ENCODE measurements at regions of chr1 and their contacts with region 1.

Region 1: DNA sequence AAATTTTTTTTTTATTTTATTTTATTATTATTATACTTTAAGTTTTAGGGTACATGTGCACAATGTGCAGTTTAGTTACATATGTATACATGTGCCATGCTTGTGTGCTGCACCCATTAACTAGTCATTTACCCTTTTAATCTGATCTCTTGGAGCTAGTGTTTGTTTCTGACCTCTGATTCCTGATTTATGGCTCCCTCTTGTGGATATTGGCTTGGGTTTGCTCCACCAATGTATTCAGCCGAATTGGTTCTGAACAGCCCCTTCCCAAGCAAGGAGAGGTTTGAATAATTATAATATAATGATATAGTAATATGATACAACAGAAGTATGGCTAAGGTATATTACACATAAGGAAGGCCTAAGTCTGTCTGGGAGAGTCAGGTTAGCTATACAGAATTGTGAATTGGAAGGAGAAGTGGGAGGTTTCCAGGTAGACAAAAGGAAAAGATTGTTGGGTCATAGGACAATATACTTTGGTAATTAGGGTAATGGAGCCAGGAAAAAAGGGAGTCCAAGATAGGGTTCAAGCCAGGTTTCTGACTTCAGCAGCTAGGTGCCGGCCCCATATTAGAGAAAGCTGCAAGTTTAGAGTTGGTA is 53.1 kb upstream of the HMCN1 start:
- DNase-seq: peak; percentile 42
- H3K4me3 Mint-ChIP-seq: no peak overlapping the region
- H3K27ac Mint-ChIP-seq: no peak overlapping the region
- H3K4me1 Mint-ChIP-seq: peaks cover 15% of the 10 kb centered on the region
- H3K27me3 Mint-ChIP-seq: no peaks in the 10 kb centered on the region

Region 2: GRCh38 chr1:184805667-184806295 is 875.4 kb before region 1 on chr1:
- CTCF ChIA-PET with region 1: interaction called, 8 read pairs
- intact Hi-C with region 1: loop called (anchors 1 kb)
- DNase-seq: peak; percentile 90
- H3K4me3 Mint-ChIP-seq: no peak overlapping the region
- H3K27ac Mint-ChIP-seq: peak overlapping the region; percentile 6
- H3K4me1 Mint-ChIP-seq: peaks cover 2% of the 10 kb centered on the region
- H3K27me3 Mint-ChIP-seq: no peaks in the 10 kb centered on the region

Region 3: DNA sequence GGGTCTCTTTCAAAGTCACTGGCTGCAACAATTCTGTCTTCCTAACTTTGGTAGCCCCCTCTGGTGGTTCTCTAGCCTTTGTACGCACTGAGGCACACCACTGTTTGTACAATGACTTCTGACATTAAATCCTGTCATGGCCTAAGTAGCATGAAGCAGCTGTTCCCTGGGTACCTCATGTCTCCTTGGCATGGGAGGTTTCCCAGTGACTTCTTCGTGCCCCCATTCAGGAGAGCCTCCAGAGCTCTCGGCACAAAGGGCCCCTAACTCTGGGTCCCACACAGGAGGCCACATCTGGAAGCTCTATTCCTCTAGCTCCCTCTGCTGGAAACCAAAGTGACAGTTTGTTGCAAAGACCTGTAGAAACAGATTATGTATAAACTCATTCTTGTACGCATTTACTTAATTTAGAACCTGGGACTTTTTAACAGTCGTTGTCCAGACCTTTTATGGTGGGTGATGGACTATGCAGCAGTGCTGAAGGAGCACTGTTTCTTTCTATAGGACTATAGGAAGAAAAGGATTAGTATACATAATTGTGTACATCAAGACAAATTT is 510.8 kb before region 1 on chr1:
- CTCF ChIA-PET with region 1: interaction called, 10 read pairs
- intact Hi-C with region 1: loop called (anchors 1 kb)
- DNase-seq: peak; percentile 60
- H3K4me3 Mint-ChIP-seq: no peak overlapping the region
- H3K27ac Mint-ChIP-seq: peak overlapping the region; percentile 46
- H3K4me1 Mint-ChIP-seq: peaks cover 3% of the 10 kb centered on the region
- H3K27me3 Mint-ChIP-seq: no peaks in the 10 kb centered on the region

Region 4: DNA sequence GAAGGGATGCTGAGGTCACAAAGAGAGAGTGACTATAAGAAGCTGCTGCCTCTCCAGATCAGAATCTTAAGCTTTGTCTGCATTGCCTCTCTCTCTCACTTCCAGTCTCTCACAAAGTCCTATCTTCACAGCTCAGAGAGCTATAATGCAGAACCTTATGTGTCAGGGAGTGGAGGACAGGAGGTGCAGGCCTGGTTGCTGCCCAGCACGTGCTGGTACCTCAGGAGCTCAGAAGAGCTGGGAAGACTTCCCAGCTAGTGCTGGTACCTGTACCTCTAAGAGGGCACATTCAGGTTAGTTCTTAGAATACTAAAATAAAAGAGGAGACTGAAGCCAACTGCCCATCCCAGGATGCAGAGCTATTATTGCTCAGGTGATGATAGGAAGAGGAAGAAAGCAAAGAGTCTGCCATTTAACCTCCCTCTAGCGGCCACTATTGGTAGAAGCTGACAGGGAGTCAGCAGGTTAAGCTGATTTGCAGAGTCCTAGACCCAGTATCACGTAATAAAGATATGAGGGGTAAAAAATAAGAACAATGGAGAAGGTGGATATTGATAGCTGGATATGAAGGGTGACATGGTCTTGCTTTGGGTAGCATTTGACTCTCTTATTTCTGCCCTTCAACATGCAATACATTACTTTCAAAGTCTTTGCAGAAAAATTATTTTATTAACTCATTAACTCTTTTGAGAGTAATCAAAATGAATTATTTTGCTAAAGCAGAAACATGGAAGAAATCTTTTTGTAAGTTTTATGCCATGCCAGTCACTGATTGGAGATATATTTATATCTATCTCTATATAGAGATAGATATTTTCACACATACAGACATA is 85.1 kb before region 1 on chr1:
- CTCF ChIA-PET with region 1: interaction called, 17 read pairs
- intact Hi-C with region 1: no loop called
- DNase-seq: peak; percentile 65
- H3K4me3 Mint-ChIP-seq: no peak overlapping the region
- H3K27ac Mint-ChIP-seq: no peak overlapping the region
- H3K4me1 Mint-ChIP-seq: peaks cover 19% of the 10 kb centered on the region
- H3K27me3 Mint-ChIP-seq: no peaks in the 10 kb centered on the region

Region 5: DNA sequence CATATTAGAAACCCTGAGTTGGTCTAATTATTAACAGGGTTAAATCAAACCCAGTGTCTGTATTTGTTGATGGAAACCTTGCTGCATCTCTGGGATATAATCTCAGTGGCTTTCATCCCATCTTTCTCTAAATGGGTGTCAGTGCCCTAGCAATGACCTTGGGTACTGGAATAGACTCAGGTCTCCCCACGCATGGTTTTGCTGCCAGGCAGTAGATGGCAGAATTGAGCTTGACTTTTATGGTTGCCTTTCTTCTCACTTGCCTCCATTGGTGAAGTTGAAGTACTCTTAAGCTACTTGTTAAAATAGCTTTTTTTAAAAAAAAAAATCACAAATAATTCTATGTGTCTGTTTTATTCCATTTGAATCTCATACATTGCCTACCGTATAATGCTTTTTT is 28.8 kb before region 1 on chr1:
- CTCF ChIA-PET with region 1: interaction called, 19 read pairs
- intact Hi-C with region 1: loop called (anchors 1 kb)
- DNase-seq: no peak
- H3K4me3 Mint-ChIP-seq: no peak overlapping the region
- H3K27ac Mint-ChIP-seq: no peak overlapping the region
- H3K4me1 Mint-ChIP-seq: peaks cover 8% of the 10 kb centered on the region
- H3K27me3 Mint-ChIP-seq: no peaks in the 10 kb centered on the region

Region 6: DNA sequence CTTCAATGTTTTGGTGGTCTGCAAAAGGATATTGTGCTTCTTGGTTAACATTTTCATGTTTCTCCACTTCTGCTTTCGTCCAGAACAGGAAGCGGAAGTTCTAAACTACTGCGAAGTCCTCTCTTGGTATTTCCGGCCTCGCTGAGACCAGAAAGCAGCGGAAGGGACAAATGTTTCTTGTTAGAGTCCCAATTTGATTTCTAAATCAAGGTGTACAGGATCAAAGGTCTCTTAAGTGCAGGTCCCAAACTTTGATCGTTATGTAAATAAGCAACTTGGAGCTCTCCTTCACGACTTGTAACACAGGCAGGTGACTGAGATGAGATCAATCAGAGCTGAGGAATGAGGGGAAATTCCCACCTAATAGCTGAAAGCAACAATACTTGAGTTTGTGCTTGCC is 12.9 kb after region 1 on chr1:
- CTCF ChIA-PET with region 1: interaction called, 33 read pairs
- intact Hi-C with region 1: no loop called
- DNase-seq: peak; percentile 45
- H3K4me3 Mint-ChIP-seq: peak overlapping the region; percentile 65
- H3K27ac Mint-ChIP-seq: peak overlapping the region; percentile 22
- H3K4me1 Mint-ChIP-seq: peaks cover 12% of the 10 kb centered on the region
- H3K27me3 Mint-ChIP-seq: no peaks in the 10 kb centered on the region

Region 7: GRCh38 chr1:186559601-186560116 is 878.5 kb after region 1 on chr1:
- CTCF ChIA-PET with region 1: no interaction called
- intact Hi-C with region 1: no loop called
- DNase-seq: no peak
- H3K4me3 Mint-ChIP-seq: no peak overlapping the region
- H3K27ac Mint-ChIP-seq: no peak overlapping the region
- H3K4me1 Mint-ChIP-seq: no peaks in the 10 kb centered on the region
- H3K27me3 Mint-ChIP-seq: no peaks in the 10 kb centered on the region

Measured in activated naive CD4-positive, alpha-beta T cell treated with anti-CD3 and anti-CD28 coated beads for 36 hours (primary cell).